ENCODE measurements at regions of chr11 and their contacts with region 1.

Region 1: DNA sequence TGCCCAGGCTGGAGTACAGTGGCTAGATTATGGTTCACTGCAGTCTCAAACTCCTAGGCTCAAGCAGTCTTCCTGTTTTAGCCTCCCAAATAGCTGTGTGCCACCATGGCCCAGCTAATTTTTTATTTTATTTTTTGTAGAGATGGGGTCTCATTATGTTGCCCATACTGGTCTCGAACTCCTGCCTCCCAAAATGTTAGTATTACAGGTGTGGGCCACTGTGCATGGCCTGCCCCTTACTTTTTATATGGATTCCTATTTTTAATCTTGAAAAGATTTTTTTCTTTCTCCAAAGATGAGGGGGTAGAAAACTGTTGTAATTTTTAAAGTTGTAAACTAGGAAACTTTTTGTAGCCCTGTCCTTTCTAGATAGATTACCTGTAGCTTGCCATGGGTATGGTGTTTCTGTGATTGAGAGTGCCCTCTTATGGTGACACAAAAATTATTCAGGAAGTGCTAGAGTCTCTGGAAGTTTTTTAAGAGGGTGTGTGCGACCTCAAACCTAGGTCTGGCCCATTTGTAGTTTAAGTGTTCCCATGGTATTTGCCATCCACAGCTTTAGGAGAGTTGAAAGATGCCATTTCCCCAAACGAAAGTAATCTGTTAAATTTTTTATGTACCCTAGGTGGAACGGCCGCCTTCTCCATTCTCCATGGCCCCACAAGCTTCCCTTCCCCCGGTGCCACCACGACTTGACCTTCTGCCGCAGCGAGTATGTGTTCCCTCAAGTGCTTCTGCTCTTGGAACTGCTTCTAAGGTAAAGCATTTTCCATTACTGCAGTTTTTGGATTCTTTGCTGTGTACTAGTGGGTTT is 32.4 kb downstream of the MCAM start:
- DNase-seq: no peak
- H3K4me3 Mint-ChIP-seq: no peak overlapping the region
- H3K27ac Mint-ChIP-seq: no peak overlapping the region
- H3K4me1 Mint-ChIP-seq: peaks cover 13% of the 10 kb centered on the region
- H3K27me3 Mint-ChIP-seq: no peaks in the 10 kb centered on the region

Region 2: GRCh38 chr11:119205574-119206510 is 78.7 kb before region 1 on chr11 and contains the start of gene CBL:
- CTCF ChIA-PET with region 1: interaction called, 26 read pairs
- POLR2A ChIA-PET with region 1: interaction called, 6 read pairs
- intact Hi-C with region 1: loop called (anchors 1 kb)
- DNase-seq: peak; percentile 98
- H3K4me3 Mint-ChIP-seq: peak within 1 kb of the TSS; percentile 91
- H3K27ac Mint-ChIP-seq: peak within 1 kb of the TSS; percentile 85
- H3K4me1 Mint-ChIP-seq: peaks cover 25% of the 10 kb centered on the region
- H3K27me3 Mint-ChIP-seq: no peaks in the 10 kb centered on the region
- total RNA-seq, gene CBL: 30.8 to 31.2 TPM

Region 3: GRCh38 chr11:119236490-119236889 is 48.1 kb before region 1 on chr11:
- CTCF ChIA-PET with region 1: interaction called, 3 read pairs
- POLR2A ChIA-PET with region 1: no interaction called
- intact Hi-C with region 1: loop called (anchors 5 kb)
- DNase-seq: no peak
- H3K4me3 Mint-ChIP-seq: no peak overlapping the region
- H3K27ac Mint-ChIP-seq: peak overlapping the region; percentile 44
- H3K4me1 Mint-ChIP-seq: peaks cover 49% of the 10 kb centered on the region
- H3K27me3 Mint-ChIP-seq: no peaks in the 10 kb centered on the region

Region 4: DNA sequence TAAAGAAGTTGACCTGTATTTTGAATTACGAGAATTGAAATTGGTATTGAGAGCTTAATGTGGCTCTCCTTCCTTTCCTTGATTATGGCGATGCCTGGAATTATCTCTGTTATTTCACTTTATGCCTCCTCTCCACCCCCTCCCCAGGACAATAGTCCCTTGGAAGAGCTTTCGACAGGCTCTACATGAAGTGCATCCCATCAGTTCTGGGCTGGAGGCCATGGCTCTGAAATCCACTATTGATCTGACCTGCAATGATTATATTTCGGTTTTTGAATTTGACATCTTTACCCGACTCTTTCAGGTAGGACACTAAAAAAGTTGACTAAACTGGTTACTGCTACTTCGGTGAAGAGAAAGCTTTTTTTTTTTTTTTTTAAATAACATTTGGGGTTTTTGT is 10.8 kb before region 1 on chr11:
- CTCF ChIA-PET with region 1: interaction called, 10 read pairs
- POLR2A ChIA-PET with region 1: no interaction called
- intact Hi-C with region 1: no loop called
- DNase-seq: no peak
- H3K4me3 Mint-ChIP-seq: no peak overlapping the region
- H3K27ac Mint-ChIP-seq: no peak overlapping the region
- H3K4me1 Mint-ChIP-seq: no peaks in the 10 kb centered on the region
- H3K27me3 Mint-ChIP-seq: no peaks in the 10 kb centered on the region

Region 5: GRCh38 chr11:119315131-119316015 is 30.8 kb after region 1 on chr11:
- CTCF ChIA-PET with region 1: interaction called, 8 read pairs
- POLR2A ChIA-PET with region 1: no interaction called
- intact Hi-C with region 1: loop called (anchors 5 kb)
- DNase-seq: peak; percentile 66
- H3K4me3 Mint-ChIP-seq: peak overlapping the region; percentile 72
- H3K27ac Mint-ChIP-seq: no peak overlapping the region
- H3K4me1 Mint-ChIP-seq: peaks cover 20% of the 10 kb centered on the region
- H3K27me3 Mint-ChIP-seq: peaks cover 15% of the 10 kb centered on the region

Region 6: GRCh38 chr11:119417726-119418540 is 133.4 kb after region 1 on chr11:
- CTCF ChIA-PET with region 1: no interaction called
- POLR2A ChIA-PET with region 1: no interaction called
- intact Hi-C with region 1: no loop called
- DNase-seq: no peak
- H3K4me3 Mint-ChIP-seq: no peak overlapping the region
- H3K27ac Mint-ChIP-seq: no peak overlapping the region
- H3K4me1 Mint-ChIP-seq: peaks cover 15% of the 10 kb centered on the region
- H3K27me3 Mint-ChIP-seq: peaks cover 30% of the 10 kb centered on the region

Measured in activated CD4-positive, alpha-beta memory T cell treated with anti-CD3 and anti-CD28 coated beads for 36 hours (primary cell).